Heart right ventricle (tissue), 16 donors: ENCODE measurements at regions of chr5 and their contacts with region 1.

Region 1: DNA sequence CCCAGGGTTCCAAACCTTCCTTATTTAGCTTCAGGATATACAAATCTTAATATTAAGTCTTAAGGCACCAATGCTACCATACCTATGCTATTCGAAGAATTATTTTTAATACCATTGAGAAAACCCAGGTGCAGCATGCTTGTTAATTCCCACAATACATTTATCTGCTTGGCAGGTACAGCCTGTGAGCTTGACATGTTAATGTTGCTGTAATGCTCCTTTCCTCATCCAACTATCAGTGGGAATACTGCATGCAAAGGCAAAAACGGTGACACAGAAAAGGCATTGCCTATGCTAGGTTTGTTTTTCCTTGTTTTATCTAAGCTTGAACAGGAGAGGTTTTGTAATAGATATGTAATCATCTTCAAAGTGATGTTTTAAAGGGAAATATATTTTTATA is 135.7 kb upstream of the COX7C start:
- DNase-seq: no peak
- ATAC-seq: no peak
- H3K4me3 ChIP-seq: no peak overlapping the region
- H3K27ac ChIP-seq: no peak overlapping the region
- H3K4me1 ChIP-seq: no peaks in the 10 kb centered on the region
- H3K27me3 ChIP-seq: no peaks in the 10 kb centered on the region
- CTCF ChIP-seq: no peak

Region 2: DNA sequence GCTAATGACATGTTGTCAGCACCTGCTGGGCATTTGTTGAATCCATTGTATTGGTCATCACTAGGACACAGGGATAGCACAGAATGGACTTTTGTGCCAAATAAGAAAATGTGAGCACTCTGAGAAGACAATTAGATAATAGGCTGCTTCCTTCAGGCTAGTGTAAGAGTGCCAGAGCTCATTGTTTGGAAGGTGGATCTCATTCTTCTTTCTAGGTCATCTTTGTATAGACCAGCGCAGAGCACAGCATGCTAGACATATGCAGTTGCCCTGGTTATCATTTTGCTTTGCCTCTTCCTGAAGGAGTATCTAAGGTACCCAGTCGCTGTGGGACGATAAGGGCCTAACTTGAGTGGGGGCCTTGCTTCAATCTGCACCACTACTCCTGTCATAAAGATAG is 357.6 kb before region 1 on chr5:
- intact Hi-C with region 1: no loop called
- DNase-seq: no peak
- ATAC-seq: no peak
- H3K4me3 ChIP-seq: no peak overlapping the region
- H3K27ac ChIP-seq: no peak overlapping the region
- H3K4me1 ChIP-seq: no peaks in the 10 kb centered on the region
- H3K27me3 ChIP-seq: no peaks in the 10 kb centered on the region
- CTCF ChIP-seq: no peak

Region 3: DNA sequence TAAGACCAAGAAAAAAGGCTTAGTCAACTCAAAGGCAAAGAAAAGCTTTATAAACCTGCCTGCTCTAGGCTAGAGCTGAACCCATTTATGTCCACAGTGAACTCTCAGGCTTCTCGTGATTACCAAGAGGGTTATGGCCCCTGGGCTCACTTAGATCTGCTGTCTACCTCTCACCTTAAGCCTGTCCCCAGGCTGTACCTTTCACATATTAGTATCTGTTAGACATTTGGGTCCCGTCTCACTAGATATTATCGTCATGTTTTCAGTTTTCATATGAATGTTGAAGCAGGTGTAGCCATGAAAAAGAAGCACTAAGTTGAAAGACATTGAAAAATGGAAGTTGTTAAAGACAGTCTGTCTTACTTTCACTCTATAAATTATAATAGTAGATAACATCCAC is 60.5 kb after region 1 on chr5:
- intact Hi-C with region 1: no loop called
- DNase-seq: no peak
- ATAC-seq: no peak
- H3K4me3 ChIP-seq: no peak overlapping the region
- H3K27ac ChIP-seq: no peak overlapping the region
- H3K4me1 ChIP-seq: no peaks in the 10 kb centered on the region
- H3K27me3 ChIP-seq: no peaks in the 10 kb centered on the region
- CTCF ChIP-seq: no peak

Region 4: GRCh38 chr5:86909456-86910295 is 427.7 kb after region 1 on chr5:
- intact Hi-C with region 1: loop called in 1 of 10 experiments (anchors 5 kb)
- DNase-seq: peak in 1 of 2 donors; percentile 8
- ATAC-seq: peak in 4 of 8 donors; percentile 53 to 73 (median 61)
- H3K4me3 ChIP-seq: no peak overlapping the region
- H3K27ac ChIP-seq: peak overlapping the region in 3 of 10 donors; percentile 17 to 51 (median 42)
- H3K4me1 ChIP-seq: peaks cover 0 to 17% (median 6%) of the 10 kb centered on the region in 9 donors
- H3K27me3 ChIP-seq: no peaks in the 10 kb centered on the region
- CTCF ChIP-seq: no peak